ENCODE measurements at regions of chr2 and their contacts with region 1.

Region 1: GRCh38 chr2:54041135-54041534 is 70.3 kb upstream of the PSME4 start:
- DNase-seq: no peak
- H3K4me3 Mint-ChIP-seq: no peak overlapping the region
- H3K27ac Mint-ChIP-seq: no peak overlapping the region
- H3K4me1 Mint-ChIP-seq: no peaks in the 10 kb centered on the region
- H3K27me3 Mint-ChIP-seq: no peaks in the 10 kb centered on the region

Region 2: GRCh38 chr2:53813151-53813550 is 228.0 kb before region 1 on chr2:
- intact Hi-C with region 1: no loop called
- DNase-seq: no peak
- H3K4me3 Mint-ChIP-seq: no peak overlapping the region
- H3K27ac Mint-ChIP-seq: no peak overlapping the region
- H3K4me1 Mint-ChIP-seq: no peaks in the 10 kb centered on the region
- H3K27me3 Mint-ChIP-seq: no peaks in the 10 kb centered on the region

Region 3: GRCh38 chr2:53886406-53887280 is 154.5 kb before region 1 on chr2:
- intact Hi-C with region 1: loop called (anchors 2 kb)
- DNase-seq: no peak
- H3K4me3 Mint-ChIP-seq: no peak overlapping the region
- H3K27ac Mint-ChIP-seq: peak overlapping the region; percentile 47
- H3K4me1 Mint-ChIP-seq: peaks cover 43% of the 10 kb centered on the region
- H3K27me3 Mint-ChIP-seq: no peaks in the 10 kb centered on the region

Region 4: DNA sequence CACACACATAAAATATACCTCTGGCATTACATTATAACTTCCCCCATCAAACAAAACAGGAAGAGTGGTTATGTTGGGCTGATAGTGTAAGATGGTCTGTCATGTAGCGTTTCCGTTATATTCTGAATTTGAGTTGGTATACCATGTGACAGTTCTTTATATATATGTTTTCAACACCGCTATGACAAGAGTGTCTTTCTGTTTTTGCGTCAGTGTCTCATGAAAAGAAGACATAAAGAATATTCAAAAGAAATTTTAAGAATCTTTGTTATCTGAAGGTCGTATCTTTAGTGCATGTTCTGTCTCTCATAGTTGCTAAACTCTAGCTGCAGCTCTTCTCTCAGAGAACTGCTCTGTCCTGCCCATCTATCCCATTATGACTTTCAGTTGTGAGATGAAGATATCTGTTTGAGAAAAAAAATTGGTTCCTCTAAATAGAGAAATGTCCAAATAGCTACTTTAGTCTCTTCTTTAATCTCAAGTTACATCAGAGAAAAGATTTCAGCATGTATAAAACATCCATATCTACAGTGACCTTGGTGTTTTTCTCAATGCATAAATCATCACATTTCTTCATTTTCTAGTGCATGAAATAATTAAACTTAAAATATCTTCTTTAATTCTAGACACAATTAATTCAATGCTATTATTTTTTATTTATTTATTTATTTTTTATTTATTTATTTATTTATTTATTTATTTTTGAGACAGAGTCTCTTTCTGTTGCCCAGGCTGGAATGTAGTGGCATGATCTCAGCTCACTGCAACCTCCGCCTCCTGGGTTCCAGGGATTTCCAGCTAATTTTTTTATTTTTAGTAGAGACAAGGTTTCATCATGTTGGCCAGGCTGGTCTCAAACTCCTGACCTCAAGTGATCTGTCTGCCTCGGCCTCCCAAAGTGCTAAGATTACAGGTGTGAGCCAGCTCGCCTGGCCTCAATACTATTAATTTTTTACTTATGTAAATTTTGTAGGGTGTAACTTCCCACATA is 46.0 kb before region 1 on chr2:
- intact Hi-C with region 1: loop called (anchors 1 kb)
- DNase-seq: no peak
- H3K4me3 Mint-ChIP-seq: peak overlapping the region; percentile 43
- H3K27ac Mint-ChIP-seq: peak overlapping the region; percentile 72
- H3K4me1 Mint-ChIP-seq: peaks cover 19% of the 10 kb centered on the region
- H3K27me3 Mint-ChIP-seq: no peaks in the 10 kb centered on the region

Region 5: GRCh38 chr2:54054271-54054670 is 13.1 kb after region 1 on chr2:
- intact Hi-C with region 1: loop called (anchors 1 kb)
- DNase-seq: no peak
- H3K4me3 Mint-ChIP-seq: peak overlapping the region; percentile 27
- H3K27ac Mint-ChIP-seq: peak overlapping the region; percentile 21
- H3K4me1 Mint-ChIP-seq: peaks cover 26% of the 10 kb centered on the region
- H3K27me3 Mint-ChIP-seq: no peaks in the 10 kb centered on the region

Measured in activated T-helper 2 cell treated with anti-CD3 and anti-CD28 coated beads, Interferon-gamma antibody, Interleukin-2, Interleukin-4, amounts not matched to agents 10 μg/mL and 5 μg/mL and 100 μg/mL, durations not matched to agents 14 hours and 24 hours and 36 hours (primary cell).